ENCODE measurements at regions of chr6 and their contacts with region 1.

Region 1: GRCh38 chr6:107318100-107318736 is 141.1 kb downstream of the PDSS2 start:
- DNase-seq: peak; percentile 69
- H3K4me3 Mint-ChIP-seq: no peak overlapping the region
- H3K27ac Mint-ChIP-seq: no peak overlapping the region
- H3K4me1 Mint-ChIP-seq: peaks cover 14% of the 10 kb centered on the region
- H3K27me3 Mint-ChIP-seq: no peaks in the 10 kb centered on the region
- CTCF ChIP-seq: peak; percentile 79

Region 2: GRCh38 chr6:107132330-107132954 is 185.8 kb before region 1 on chr6:
- CTCF ChIA-PET with region 1: no interaction called
- POLR2A ChIA-PET with region 1: no interaction called
- intact Hi-C with region 1: loop called (anchors 10 kb)
- DNase-seq: peak; percentile 44
- H3K4me3 Mint-ChIP-seq: no peak overlapping the region
- H3K27ac Mint-ChIP-seq: no peak overlapping the region
- H3K4me1 Mint-ChIP-seq: no peaks in the 10 kb centered on the region
- H3K27me3 Mint-ChIP-seq: no peaks in the 10 kb centered on the region
- CTCF ChIP-seq: peak; percentile 52

Region 3: GRCh38 chr6:107185391-107185970 is 132.7 kb before region 1 on chr6:
- CTCF ChIA-PET with region 1: interaction called, 6 read pairs
- POLR2A ChIA-PET with region 1: no interaction called
- intact Hi-C with region 1: loop called (anchors 5 kb)
- DNase-seq: peak; percentile 58
- H3K4me3 Mint-ChIP-seq: no peak overlapping the region
- H3K27ac Mint-ChIP-seq: no peak overlapping the region
- H3K4me1 Mint-ChIP-seq: no peaks in the 10 kb centered on the region
- H3K27me3 Mint-ChIP-seq: no peaks in the 10 kb centered on the region
- CTCF ChIP-seq: peak; percentile 42

Region 4: GRCh38 chr6:107246972-107247615 is 71.1 kb before region 1 on chr6:
- CTCF ChIA-PET with region 1: interaction called, 19 read pairs
- POLR2A ChIA-PET with region 1: interaction called, 3 read pairs
- intact Hi-C with region 1: loop called (anchors 5 kb)
- DNase-seq: peak; percentile 93
- H3K4me3 Mint-ChIP-seq: peak overlapping the region; percentile 65
- H3K27ac Mint-ChIP-seq: peak overlapping the region; percentile 95
- H3K4me1 Mint-ChIP-seq: peaks cover 25% of the 10 kb centered on the region
- H3K27me3 Mint-ChIP-seq: no peaks in the 10 kb centered on the region
- CTCF ChIP-seq: no peak

Region 5: DNA sequence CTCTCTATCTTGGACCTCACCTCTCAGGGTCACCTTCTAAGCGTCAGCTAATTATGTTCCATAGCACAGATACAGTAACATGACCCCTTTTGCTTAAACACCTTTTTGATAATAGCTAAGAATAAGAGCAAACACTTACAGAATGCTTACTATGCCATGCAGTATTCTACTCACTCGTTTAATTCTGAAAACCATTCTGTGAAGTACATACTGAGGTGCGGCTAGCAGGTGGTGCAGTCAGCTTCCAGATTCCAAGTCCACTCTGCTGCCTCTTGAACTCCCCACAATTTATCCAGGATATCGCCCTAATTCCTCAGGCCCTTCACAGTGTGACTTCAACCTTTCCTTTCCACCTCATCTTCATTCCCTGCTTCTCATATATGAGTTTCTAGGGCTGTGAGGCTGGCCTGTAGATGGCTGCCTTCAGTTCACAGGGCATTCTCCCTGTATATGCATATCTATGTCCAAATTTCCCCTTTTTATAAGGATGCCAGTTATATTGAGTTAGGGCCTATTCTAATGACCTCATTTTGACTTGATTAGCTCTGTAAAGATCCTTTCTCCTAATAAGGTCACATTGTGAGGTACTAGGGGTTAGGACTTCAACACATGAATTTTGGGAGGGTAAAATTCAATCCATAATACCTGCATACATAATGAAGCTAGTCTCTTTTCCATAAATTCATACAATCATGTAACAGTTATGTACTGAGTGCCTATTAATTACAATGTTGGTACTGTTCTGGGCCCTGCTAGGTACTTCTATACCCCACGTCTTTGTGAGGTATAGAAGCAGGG is 11.0 kb after region 1 on chr6:
- CTCF ChIA-PET with region 1: interaction called, 20 read pairs
- POLR2A ChIA-PET with region 1: no interaction called
- intact Hi-C with region 1: no loop called
- DNase-seq: no peak
- H3K4me3 Mint-ChIP-seq: no peak overlapping the region
- H3K27ac Mint-ChIP-seq: no peak overlapping the region
- H3K4me1 Mint-ChIP-seq: no peaks in the 10 kb centered on the region
- H3K27me3 Mint-ChIP-seq: no peaks in the 10 kb centered on the region
- CTCF ChIP-seq: no peak

Region 6: GRCh38 chr6:107459283-107460082 is 141.3 kb after region 1 on chr6 and contains the start of gene PDSS2:
- CTCF ChIA-PET with region 1: interaction called, 15 read pairs
- POLR2A ChIA-PET with region 1: interaction called, 7 read pairs
- intact Hi-C with region 1: loop called (anchors 2 kb)
- DNase-seq: peak; percentile 98
- H3K4me3 Mint-ChIP-seq: peak within 1 kb of the TSS; percentile 81
- H3K27ac Mint-ChIP-seq: peak within 1 kb of the TSS; percentile 94
- H3K4me1 Mint-ChIP-seq: peaks cover 21% of the 10 kb centered on the region
- H3K27me3 Mint-ChIP-seq: no peaks in the 10 kb centered on the region
- CTCF ChIP-seq: peak; percentile 47
- total RNA-seq, gene PDSS2: 10.2 and 11.1 TPM in 2 replicates

Region 7: DNA sequence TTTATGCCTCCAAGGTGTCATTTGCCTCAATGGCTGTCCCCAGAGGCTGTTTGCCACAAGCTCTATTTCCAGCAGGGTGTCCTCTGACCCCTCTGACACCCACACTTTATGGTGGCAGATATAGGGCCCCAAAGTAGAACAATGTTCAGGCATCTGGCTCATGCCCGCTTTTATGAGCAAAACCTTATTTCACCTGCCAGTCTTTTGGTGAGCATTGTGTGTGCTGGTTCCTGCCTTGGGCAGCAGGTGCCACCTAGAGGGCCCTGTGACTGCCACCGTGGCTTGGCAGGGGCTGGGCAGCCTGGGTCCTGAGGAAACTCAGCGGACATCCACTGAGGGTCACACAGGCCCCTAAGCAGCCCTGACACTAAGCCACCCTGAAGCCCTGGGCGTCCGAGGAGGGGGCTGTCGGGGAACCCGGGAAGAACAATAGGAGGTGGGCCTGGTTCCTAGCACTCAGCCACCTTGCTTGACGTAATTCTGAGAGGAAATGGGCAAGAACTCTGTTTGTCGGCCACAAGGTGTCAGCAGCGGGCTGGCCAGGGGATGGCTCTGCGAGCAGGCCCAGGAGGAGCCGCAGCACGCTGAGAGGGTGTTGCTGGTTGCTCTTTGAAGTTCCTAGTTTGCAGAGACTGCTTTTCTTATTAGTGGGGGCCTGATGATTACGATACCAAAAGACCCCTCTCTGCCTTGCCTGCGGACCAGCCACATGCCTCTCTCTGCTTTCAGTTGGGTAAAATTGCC is 356.9 kb after region 1 on chr6:
- CTCF ChIA-PET with region 1: interaction called, 5 read pairs
- POLR2A ChIA-PET with region 1: no interaction called
- intact Hi-C with region 1: loop called (anchors 1 kb)
- DNase-seq: peak; percentile 82
- H3K4me3 Mint-ChIP-seq: no peak overlapping the region
- H3K27ac Mint-ChIP-seq: peak overlapping the region; percentile 51
- H3K4me1 Mint-ChIP-seq: peaks cover 5% of the 10 kb centered on the region
- H3K27me3 Mint-ChIP-seq: no peaks in the 10 kb centered on the region
- CTCF ChIP-seq: peak; percentile 89

Region 8: DNA sequence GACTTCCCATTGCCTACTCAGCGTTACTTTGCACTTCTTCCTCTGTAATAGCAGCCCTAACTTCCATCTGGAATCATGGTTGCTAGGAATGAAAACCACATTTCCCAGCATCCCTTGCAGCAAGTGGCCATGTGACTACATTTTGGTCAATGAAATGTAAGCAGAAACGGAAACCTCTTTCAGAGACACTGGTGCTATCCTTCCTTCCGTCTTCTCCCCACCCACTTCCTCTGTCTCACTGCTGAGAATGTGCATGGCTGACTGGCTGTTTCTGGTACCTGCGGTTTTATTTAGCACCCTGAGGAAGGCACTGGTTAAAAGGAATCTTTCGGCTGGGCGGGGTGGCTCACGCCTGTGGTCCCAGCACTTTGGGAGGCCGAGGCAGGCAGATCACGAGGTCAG is 398.5 kb after region 1 on chr6:
- CTCF ChIA-PET with region 1: no interaction called
- POLR2A ChIA-PET with region 1: no interaction called
- intact Hi-C with region 1: no loop called
- DNase-seq: peak; percentile 26
- H3K4me3 Mint-ChIP-seq: no peak overlapping the region
- H3K27ac Mint-ChIP-seq: no peak overlapping the region
- H3K4me1 Mint-ChIP-seq: peaks cover 15% of the 10 kb centered on the region
- H3K27me3 Mint-ChIP-seq: peaks cover 24% of the 10 kb centered on the region
- CTCF ChIP-seq: no peak

Measured in MCF 10A (cell line).